GM10248 (cell line): ENCODE measurements at regions of chr11 and their contacts with region 1.

Region 1: GRCh38 chr11:127843483-127844396 is 743.6 kb downstream of the ETS1 start:
- DNase-seq: peak; percentile 43
- CTCF ChIP-seq: peak; percentile 74

Region 2: DNA sequence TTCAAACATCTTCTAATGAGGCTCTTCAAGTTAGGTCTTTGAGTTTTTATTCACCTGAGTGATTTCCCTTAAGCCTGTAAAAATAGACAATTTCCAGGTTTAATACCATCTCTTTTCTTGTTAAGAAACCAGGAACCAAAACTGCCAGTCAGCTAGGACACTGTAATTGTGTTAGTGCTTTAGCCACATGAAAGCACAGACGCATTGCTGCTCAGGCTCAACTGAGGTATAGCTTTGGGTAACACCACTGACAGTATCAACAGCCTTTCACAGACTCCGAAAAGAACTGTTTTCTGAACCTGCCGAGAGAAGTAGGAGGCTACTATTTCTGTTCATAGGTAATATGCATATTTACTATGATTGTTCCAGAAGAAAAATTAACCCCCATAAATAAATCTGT is 25.1 kb before region 1 on chr11:
- CTCF ChIA-PET with region 1: interaction called, 13 read pairs
- POLR2A ChIA-PET with region 1: no interaction called
- DNase-seq: no peak
- CTCF ChIP-seq: no peak

Region 3: GRCh38 chr11:127825183-127825582 is 18.6 kb before region 1 on chr11:
- CTCF ChIA-PET with region 1: interaction called, 13 read pairs
- POLR2A ChIA-PET with region 1: no interaction called
- DNase-seq: no peak
- CTCF ChIP-seq: no peak